SK-N-SH (cell line): ENCODE measurements at regions of chr1 and their contacts with region 1.

Region 1: DNA sequence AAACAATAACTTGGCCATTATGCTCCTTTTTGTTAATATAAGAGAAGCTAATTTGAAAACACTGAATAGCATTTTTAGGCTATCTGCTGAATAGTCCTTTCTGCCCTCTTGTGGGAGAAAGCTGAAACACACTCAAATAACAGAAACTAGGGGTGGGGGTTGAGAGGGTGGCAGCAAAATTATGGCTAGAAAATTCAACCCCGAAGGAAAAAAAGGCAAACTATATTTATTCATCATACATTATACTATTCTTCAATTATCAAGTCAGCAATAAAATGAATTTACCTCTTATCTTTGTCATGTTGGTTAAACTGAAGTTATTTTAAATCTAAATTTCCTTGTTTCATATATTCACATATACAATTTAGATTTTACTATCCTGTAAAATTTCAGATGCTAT is 255.9 kb downstream of the FAF1 start:
- DNase-seq: peak; percentile 64
- H3K4me3 ChIP-seq: no peak overlapping the region
- H3K27ac ChIP-seq: no peak overlapping the region
- H3K4me1 ChIP-seq: peaks cover 0 to 2% of the 10 kb centered on the region in 2 experiments; a peak in 1 of 4 replicates
- H3K27me3 ChIP-seq: no peaks in the 10 kb centered on the region
- CTCF ChIP-seq: peak; percentile 87
- EP300 ChIP-seq: no peak
- RAD21 ChIP-seq: peak; percentile 75

Region 2: DNA sequence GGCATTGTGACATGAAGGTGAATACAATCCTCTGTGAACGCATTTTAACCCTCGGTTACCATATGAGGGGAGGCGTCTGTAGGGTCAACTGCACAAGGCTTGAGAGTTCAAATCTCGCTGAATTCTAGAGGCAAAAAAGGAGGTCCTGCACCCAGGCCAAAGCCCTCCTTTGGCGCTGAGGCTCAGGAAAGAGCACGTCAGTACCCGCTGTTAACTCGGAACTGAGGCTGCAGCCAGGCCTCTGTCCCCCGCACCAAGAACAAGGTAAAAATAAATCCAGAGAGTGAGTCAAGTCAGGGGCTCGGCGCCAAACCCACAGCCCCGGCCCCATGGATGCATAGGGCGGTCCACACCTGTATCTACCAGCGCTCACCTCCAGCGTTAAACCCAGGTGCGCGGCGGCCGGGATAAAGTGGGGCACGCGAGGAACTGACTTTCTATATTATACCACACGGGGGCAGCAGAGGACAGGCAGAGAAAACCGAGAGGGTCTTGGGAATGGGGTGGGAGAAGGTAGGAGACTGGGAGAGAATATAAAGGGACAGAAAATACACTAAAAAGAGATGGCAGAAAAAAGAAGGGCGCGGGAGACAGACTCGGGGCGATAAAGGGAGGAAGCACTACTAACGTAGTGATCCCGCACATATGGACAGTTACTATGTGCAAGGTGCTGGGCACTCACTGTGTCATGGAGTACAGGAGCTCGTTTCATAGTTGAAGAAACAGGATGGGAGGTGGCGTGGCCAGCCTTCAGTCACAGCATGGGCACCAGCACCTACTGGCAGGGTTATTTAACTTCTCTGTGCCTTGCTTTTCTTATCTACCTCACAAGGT is 335.7 kb before region 1 on chr1:
- CTCF ChIA-PET with region 1: interaction called, 39 read pairs
- POLR2A ChIA-PET with region 1: no interaction called
- DNase-seq: peak; percentile 80
- H3K4me3 ChIP-seq: peak overlapping the region in 1 of 2 experiments; percentile 53; a peak in 1 of 4 replicates
- H3K27ac ChIP-seq: no peak overlapping the region
- H3K4me1 ChIP-seq: no peaks in the 10 kb centered on the region; a peak in 1 of 4 replicates
- H3K27me3 ChIP-seq: no peaks in the 10 kb centered on the region
- CTCF ChIP-seq: peak; percentile 90
- EP300 ChIP-seq: no peak
- RAD21 ChIP-seq: peak; percentile 91

Region 3: GRCh38 chr1:50422946-50423669 is 281.0 kb before region 1 on chr1 and contains the start of gene DMRTA2:
- CTCF ChIA-PET with region 1: interaction called, 11 read pairs
- POLR2A ChIA-PET with region 1: no interaction called
- DNase-seq: peak; percentile 86
- H3K4me3 ChIP-seq: peak within 1 kb of the TSS; percentile 33 to 48
- H3K27ac ChIP-seq: no peak within 1 kb of the TSS
- H3K4me1 ChIP-seq: peaks cover 11 to 30% of the 10 kb centered on the region in 2 experiments; a peak in 1 of 4 replicates
- H3K27me3 ChIP-seq: peaks cover 98% of the 10 kb centered on the region
- CTCF ChIP-seq: no peak
- EP300 ChIP-seq: no peak
- RAD21 ChIP-seq: no peak
- polyA plus RNA-seq, gene DMRTA2: 0.02 TPM in 1 of 2 replicates, not detected in the other

Region 4: DNA sequence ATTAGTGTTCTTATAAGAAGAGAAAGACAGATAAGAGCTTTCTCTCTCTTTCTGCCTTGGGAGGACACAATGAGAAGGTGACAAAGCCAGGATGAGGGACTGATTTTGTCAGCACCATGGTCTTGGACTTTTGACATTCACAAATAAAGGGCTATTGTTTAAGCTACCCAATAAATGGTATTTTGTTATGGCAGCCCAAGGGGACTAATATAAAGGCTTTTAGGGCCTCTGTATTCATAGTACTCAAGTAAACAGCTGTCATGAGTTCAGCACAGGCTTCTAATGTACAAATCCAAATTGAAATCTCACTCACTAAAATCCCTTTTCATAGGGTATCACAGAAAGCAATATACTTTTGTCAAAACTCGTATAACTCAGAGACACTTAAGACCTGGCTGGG is 13.2 kb after region 1 on chr1:
- CTCF ChIA-PET with region 1: interaction called, 12 read pairs
- POLR2A ChIA-PET with region 1: no interaction called
- DNase-seq: no peak
- H3K4me3 ChIP-seq: no peak overlapping the region
- H3K27ac ChIP-seq: no peak overlapping the region
- H3K4me1 ChIP-seq: no peaks in the 10 kb centered on the region
- H3K27me3 ChIP-seq: no peaks in the 10 kb centered on the region
- CTCF ChIP-seq: no peak
- EP300 ChIP-seq: no peak
- RAD21 ChIP-seq: no peak

Region 5: GRCh38 chr1:50796272-50796671 is 92.1 kb after region 1 on chr1:
- CTCF ChIA-PET with region 1: no interaction called
- POLR2A ChIA-PET with region 1: no interaction called
- DNase-seq: no peak
- H3K4me3 ChIP-seq: no peak overlapping the region
- H3K27ac ChIP-seq: no peak overlapping the region
- H3K4me1 ChIP-seq: no peaks in the 10 kb centered on the region
- H3K27me3 ChIP-seq: no peaks in the 10 kb centered on the region
- CTCF ChIP-seq: no peak
- EP300 ChIP-seq: no peak
- RAD21 ChIP-seq: no peak